ENCODE measurements at regions of chr3 and their contacts with region 1.

Region 1: GRCh38 chr3:42961633-42962032 is 17.5 kb upstream of the GASK1A start:
- DNase-seq: no peak

Region 2: DNA sequence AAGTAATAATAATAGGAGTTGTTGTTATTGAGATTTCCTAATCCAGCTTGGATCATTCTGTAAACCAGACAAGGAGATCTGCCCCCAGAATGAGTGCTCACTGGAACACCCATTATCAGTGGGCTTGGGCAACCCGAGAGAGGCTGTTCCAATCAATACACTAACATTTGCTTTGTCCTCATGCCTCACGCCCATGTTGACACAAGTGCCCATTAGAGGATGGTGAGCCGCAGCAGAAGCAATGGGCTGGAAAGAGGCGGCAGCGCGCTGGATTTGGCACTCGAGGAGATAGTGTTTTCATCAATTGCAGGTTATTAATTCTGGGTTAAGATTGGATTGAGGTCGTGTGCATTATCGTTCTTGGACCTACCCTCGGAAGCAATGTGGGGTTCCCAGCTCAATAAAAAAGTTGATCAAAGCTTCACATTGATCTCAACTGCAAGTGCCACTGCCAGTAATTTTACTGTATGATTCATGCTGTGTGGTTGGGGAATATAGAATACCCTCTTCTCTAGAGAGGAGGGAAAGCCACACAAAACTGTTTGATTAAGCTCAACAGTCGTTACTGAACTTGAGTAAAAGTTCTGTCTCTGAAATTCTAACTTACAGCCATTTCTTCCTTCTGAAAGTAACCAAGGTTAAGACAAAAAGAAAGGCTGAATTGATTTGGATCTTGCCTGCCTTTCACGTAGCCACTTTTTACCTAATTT is 566.9 kb before region 1 on chr3:
- intact Hi-C with region 1: no loop called
- DNase-seq: no peak

Region 3: GRCh38 chr3:42600111-42600988 is 361.3 kb before region 1 on chr3 and contains the start of gene NKTR:
- intact Hi-C with region 1: no loop called
- DNase-seq: peak; percentile 99
- total RNA-seq, gene NKTR: 75.2 to 78.0 TPM

Region 4: DNA sequence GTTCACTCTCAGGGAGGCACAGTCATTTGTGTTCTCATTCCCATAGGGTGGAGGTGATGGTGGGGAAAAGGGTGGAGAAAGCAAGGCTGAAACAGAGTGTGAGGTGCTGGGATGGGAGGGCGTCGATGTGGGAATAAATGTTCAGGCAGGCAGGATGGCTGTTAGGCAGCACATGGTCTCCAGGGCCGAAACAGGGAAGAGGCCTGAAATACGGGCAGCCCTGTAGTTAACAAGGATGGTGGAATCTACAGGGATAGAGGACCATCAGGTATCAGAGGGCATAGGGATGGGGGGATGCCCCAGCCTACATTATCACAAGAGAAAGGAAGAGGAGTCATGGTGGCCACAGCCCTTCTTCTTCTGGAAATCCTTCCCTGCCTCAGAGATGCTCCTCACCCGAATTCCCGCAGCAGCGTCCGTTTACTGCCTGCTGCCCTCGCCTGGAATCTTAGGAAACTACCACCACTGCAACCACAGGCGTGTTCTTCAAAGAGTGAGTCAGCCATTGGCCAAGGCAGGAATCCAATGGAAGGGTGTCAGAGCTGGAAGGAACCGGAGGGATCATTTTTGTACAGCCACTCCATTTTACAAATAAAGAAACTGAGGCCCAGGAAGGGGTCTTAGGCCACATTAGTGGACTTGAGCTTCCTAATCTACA is 194.0 kb after region 1 on chr3:
- intact Hi-C with region 1: loop called (anchors 5 kb)
- DNase-seq: peak; percentile 86

Region 5: GRCh38 chr3:44584646-44585501 is 1623.2 kb after region 1 on chr3 and contains the start of gene ZNF660:
- intact Hi-C with region 1: loop called in 1 of 2 experiments (anchors 10 kb)
- DNase-seq: peak; percentile 87
- total RNA-seq, gene ZNF660: 6.2 to 7.7 TPM

Measured in posterior vena cava (tissue), 2 donors.